A549 (cell line): ENCODE measurements at regions of chr1 and their contacts with region 1.

Region 1: DNA sequence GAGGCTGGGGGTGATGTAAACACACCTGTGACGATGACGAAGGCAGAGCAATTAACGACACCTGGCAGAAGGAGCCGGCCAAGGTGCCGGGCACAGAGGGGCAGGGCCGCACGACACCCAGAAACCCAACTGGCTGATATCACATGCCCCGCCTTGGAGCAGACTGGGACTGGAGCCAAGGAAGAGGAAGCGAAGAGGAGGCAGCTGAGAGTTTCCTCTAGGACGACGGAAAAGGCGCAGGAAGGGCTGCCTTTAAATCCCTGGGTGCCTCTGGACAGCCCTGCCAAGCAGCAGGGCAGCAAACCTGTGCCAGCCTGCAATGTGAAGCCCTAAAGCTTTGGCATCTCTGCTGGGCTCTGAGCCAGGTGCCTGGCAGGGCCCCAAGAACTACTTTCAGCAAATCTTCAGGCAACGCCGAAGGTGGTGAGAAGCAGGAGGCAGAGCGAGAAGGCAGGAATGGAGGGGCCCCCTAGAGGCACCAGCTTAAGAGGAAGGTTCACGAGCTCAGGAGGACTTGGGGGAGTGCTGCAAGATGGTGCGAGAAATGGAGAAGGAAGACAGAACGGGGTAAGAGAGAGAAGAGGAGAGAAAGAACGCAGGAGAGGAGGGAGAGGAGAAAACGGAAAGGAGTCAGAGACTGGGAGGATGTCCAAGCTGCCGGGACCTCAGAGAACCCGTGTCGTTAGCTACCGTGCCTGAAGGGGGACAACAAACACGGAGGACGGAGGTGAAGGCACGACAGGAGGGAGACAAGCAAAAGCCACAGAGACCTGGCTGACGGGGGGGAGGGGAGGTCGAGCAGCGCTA is 25.3 kb upstream of the PEF1 start:
- DNase-seq: peak; percentile 22 to 40
- ATAC-seq: peak; percentile 20 to 58; a peak in 3 of 6 replicates
- H3K4me3 ChIP-seq: no peak overlapping the region
- H3K27ac ChIP-seq: peak overlapping the region; percentile 28 to 91
- H3K4me1 ChIP-seq: peaks cover 42% of the 10 kb centered on the region
- CTCF ChIP-seq: no peak; the same call in 2 of the 3 replicates
- EP300 ChIP-seq: no peak
- POLR2A ChIP-seq: no peak
- RAD21 ChIP-seq: 0 out of 5 replicates have a peak, but pooled peaks of 1 of the 2 experiments have one; percentile 5

Region 2: DNA sequence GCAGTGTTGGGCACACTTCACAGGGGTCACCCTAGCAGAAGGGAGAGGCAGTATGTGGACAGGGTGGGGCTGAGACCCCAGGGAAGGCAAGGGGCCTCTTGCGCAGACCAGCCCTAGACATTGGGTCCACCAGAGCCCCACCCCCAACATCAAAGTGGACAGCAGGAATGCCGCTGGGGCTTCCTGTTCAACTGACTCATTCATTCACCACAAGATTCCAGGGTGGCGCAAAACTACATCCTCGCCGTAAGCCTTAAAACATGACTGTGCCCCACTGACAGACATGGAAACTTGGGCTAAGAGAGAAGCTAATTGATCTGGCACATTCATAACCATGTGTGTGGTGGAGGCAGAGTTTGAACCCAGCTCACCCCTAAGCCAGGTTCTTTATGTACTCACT is 19.8 kb after region 1 on chr1:
- CTCF ChIA-PET with region 1: interaction called, 13 read pairs
- POLR2A ChIA-PET with region 1: no interaction called
- DNase-seq: peak; percentile 47 to 64
- ATAC-seq: peak; percentile 57 to 66; a peak in 4 of 6 replicates
- H3K4me3 ChIP-seq: no peak overlapping the region
- H3K27ac ChIP-seq: peak overlapping the region; percentile 68 to 95
- H3K4me1 ChIP-seq: peaks cover 61% of the 10 kb centered on the region
- CTCF ChIP-seq: no peak
- EP300 ChIP-seq: no peak
- POLR2A ChIP-seq: no peak
- RAD21 ChIP-seq: no peak

Region 3: GRCh38 chr1:31891280-31891679 is 221.3 kb after region 1 on chr1:
- CTCF ChIA-PET with region 1: no interaction called
- POLR2A ChIA-PET with region 1: no interaction called
- DNase-seq: no peak
- ATAC-seq: no peak
- H3K4me3 ChIP-seq: no peak overlapping the region
- H3K27ac ChIP-seq: no peak overlapping the region
- H3K4me1 ChIP-seq: no peaks in the 10 kb centered on the region
- CTCF ChIP-seq: no peak
- EP300 ChIP-seq: no peak
- POLR2A ChIP-seq: no peak
- RAD21 ChIP-seq: no peak